ENCODE measurements at regions of chr7 and their contacts with region 1.

Region 1: DNA sequence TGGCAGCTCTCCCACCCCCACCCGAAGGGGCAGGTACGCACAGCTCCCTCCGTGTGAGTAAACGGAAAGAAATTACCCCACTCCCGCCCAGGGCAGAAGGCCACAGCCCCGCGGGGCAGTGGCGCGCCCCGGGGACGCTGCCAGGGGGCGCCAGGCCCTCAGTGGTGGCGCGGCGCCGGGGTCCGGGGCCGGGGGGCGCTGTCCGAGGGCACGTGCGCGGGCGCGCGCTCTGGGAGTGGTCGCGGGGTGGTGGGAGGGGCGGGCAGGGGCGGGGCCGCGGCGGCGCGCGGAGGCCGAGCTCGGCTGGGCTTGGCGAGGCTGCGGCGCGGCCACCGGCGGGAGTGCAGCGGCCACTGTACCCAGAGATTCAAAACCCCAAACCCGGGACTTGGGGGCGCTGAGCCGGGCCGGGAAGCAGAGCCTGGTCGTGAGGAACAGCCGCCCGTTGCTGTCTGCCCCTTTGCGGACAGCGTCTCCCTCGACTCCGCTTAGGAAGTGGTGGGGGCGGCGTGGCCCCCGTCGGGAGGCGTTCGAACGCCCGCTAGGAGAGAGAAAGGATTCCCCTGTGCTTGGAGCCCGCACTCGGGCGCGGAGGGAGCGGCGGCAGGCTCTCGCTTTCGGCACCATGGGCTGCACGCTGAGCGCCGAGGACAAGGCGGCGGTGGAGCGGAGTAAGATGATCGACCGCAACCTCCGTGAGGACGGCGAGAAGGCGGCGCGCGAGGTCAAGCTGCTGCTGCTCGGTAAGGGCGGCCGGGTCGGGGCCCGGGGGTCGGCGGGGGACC is at the start of gene GNAI1:
- DNase-seq: peak; percentile 84
- H3K4me3 ChIP-seq: peak within 1 kb of the TSS; percentile 90 to 99 (median 92)
- H3K27ac ChIP-seq: peak within 1 kb of the TSS; percentile 93 to 99 (median 97)
- H3K4me1 ChIP-seq: peaks cover 0 to 34% (median 29%) of the 10 kb centered on the region in 4 donors
- H3K27me3 ChIP-seq: no peaks in the 10 kb centered on the region
- CTCF ChIP-seq: peak in 2 of 4 experiments; percentile 19 to 31
- EP300 ChIP-seq: no peak
- POLR2A ChIP-seq: peak; percentile 37 to 44
- total RNA-seq, gene GNAI1: 50.9 to 98.9 (median 61.0) TPM

Region 2: DNA sequence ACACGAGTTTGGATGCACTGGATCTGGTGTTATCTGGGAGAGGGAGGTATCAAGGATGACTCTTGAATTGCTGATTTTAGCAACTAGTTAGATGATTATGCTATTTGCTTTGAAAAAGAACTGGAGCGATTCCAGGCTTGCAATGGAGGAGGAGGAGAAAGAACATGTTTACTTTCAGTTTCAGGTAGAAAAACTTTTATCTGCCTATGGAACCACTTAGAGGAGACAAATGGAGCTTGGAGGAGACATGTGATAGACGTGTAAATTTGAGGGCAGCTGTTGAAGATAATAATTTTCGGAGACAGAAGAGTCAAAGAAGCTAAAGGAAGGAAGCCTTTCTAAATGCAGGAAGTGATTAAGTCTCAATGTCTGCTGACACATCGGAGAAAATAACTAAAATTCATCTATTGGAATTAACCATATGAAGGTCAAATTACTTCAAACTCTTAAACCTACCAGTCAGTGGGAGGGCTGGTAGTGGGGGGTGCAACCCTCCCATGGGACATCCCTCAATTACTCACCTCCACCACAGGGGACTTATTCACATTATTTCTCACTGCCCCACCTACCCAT is 56.5 kb before region 1 on chr7:
- intact Hi-C with region 1: no loop called
- DNase-seq: no peak
- H3K4me3 ChIP-seq: peak overlapping the region in 3 of 4 donors; percentile 4 to 11 (median 7)
- H3K27ac ChIP-seq: no peak overlapping the region
- H3K4me1 ChIP-seq: no peaks in the 10 kb centered on the region
- H3K27me3 ChIP-seq: no peaks in the 10 kb centered on the region
- CTCF ChIP-seq: no peak
- EP300 ChIP-seq: no peak
- POLR2A ChIP-seq: no peak

Region 3: GRCh38 chr7:80224415-80224814 is 89.7 kb after region 1 on chr7:
- intact Hi-C with region 1: loop called (anchors 5 kb)
- DNase-seq: no peak
- H3K4me3 ChIP-seq: no peak overlapping the region
- H3K27ac ChIP-seq: no peak overlapping the region
- H3K4me1 ChIP-seq: peaks cover 0 to 5% (median 0%) of the 10 kb centered on the region in 4 donors
- H3K27me3 ChIP-seq: no peaks in the 10 kb centered on the region
- CTCF ChIP-seq: no peak
- EP300 ChIP-seq: no peak
- POLR2A ChIP-seq: no peak

Region 4: DNA sequence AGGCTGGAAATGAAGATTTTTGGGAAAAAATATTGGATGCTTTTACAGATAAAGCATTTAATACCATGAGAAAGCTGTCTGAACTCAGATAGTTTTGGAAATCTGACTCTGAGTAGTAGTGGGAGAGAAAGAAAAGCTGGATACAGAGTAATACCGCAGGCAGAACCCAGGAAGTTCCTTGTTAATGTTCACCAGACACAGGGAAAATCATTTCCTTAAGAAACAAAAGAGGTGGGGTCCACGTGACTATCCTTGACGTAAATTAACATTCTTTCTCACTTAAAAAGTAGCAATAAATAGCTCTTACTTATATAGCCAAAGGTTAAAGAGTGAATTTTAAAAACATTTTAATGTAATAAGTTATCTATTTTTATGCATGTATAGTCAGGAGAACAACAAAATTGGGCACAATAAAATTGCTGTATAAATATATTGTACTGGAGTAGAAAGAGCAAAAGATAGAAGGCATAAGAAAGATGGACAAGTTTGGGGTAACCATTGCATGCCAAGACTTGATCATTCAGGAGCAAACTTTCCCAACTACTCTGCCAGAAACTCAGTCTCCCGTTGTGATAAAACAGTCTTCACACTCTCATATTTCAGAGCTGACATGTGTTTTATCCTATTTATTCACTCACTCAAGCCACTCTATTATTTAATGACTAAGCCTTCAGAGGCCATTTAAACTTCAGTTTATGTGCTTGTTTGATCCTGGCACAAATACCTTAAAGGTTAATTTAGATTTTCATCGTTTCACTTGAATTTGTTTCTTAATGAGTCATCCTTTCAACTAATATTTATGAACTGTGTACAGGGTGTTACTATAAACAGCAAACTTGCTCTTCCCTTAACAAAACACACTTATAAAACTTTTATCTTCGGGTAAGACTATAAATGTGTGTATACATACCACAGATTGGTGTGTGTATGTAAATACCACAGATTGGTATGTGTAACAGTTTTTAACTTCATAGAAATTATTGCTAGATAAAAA is 143.0 kb after region 1 on chr7:
- intact Hi-C with region 1: loop called (anchors 5 kb)
- DNase-seq: no peak
- H3K4me3 ChIP-seq: no peak overlapping the region
- H3K27ac ChIP-seq: peak overlapping the region; percentile 20 to 67 (median 52)
- H3K4me1 ChIP-seq: peaks cover 0 to 38% (median 30%) of the 10 kb centered on the region in 4 donors
- H3K27me3 ChIP-seq: no peaks in the 10 kb centered on the region
- CTCF ChIP-seq: no peak
- EP300 ChIP-seq: no peak
- POLR2A ChIP-seq: no peak

Region 5: DNA sequence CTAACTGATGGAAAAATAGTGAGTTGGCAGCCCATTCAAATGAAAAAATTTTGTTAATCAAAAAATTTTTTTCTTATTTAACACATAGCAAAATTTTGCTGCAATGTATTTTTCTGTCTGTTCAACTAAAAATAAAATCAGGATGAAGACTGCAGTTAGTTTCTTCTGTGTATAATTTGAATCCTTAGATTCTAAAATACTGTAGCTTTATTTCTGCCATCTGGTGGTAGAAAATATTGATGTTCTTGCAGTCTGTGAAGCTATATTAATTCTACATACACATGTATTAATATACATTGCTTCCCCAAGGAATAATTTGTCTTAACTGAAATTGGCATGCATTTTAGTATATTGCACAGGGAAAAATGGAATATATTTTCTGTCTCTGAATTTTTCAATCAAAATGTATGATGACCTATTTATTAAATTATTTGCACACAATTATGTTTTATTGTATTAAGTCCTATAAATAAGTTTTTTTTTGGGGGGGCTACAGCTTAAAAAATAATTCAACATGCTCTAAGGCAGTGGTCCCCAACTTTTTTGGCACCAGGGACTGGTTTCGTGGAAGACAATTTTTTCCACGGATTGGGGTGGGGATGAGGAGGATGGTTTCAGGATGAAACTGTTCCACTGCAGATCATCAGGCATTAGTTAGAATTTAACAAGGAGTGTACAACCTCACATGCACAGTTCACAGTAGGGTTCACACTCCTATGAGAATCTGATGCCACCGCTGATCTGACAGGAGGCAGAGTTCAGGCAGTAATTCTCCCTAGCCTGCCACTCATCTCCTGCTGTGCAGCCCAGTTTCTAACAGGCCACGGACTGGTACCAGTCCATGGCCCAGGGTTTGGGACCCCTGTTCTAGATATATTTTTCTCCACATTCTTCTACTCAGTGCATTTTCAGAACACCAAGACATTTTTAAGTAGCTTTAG is 257.8 kb after region 1 on chr7:
- intact Hi-C with region 1: loop called (anchors 2 kb)
- DNase-seq: no peak
- H3K4me3 ChIP-seq: no peak overlapping the region
- H3K27ac ChIP-seq: no peak overlapping the region
- H3K4me1 ChIP-seq: peaks cover 0 to 4% (median 0%) of the 10 kb centered on the region in 4 donors
- H3K27me3 ChIP-seq: no peaks in the 10 kb centered on the region
- CTCF ChIP-seq: peak; percentile 17 to 57 (median 44)
- EP300 ChIP-seq: no peak
- POLR2A ChIP-seq: no peak